Transverse colon (tissue), 4 donors: ENCODE measurements at regions of chr11 and their contacts with region 1.

Region 1: GRCh38 chr11:128831174-128832120 is 35.6 kb downstream of the KCNJ1 start:
- DNase-seq: peak; percentile 83
- H3K4me3 ChIP-seq: peak overlapping the region in 1 of 4 donors; percentile 9
- H3K27ac ChIP-seq: peak overlapping the region in 1 of 4 donors; percentile 7
- H3K4me1 ChIP-seq: peaks cover 0 to 6% (median 0%) of the 10 kb centered on the region in 4 donors
- H3K27me3 ChIP-seq: no peaks in the 10 kb centered on the region
- CTCF ChIP-seq: peak; percentile 80 to 92 (median 89)
- EP300 ChIP-seq: no peak
- POLR2A ChIP-seq: no peak

Region 2: GRCh38 chr11:128146926-128147605 is 684.4 kb before region 1 on chr11:
- in situ Hi-C with region 1: no loop called
- intact Hi-C with region 1: no loop called
- DNase-seq: no peak
- H3K4me3 ChIP-seq: no peak overlapping the region
- H3K27ac ChIP-seq: no peak overlapping the region
- H3K4me1 ChIP-seq: peaks cover 0 to 12% (median 0%) of the 10 kb centered on the region in 4 donors
- H3K27me3 ChIP-seq: no peaks in the 10 kb centered on the region
- CTCF ChIP-seq: no peak
- EP300 ChIP-seq: no peak
- POLR2A ChIP-seq: no peak

Region 3: DNA sequence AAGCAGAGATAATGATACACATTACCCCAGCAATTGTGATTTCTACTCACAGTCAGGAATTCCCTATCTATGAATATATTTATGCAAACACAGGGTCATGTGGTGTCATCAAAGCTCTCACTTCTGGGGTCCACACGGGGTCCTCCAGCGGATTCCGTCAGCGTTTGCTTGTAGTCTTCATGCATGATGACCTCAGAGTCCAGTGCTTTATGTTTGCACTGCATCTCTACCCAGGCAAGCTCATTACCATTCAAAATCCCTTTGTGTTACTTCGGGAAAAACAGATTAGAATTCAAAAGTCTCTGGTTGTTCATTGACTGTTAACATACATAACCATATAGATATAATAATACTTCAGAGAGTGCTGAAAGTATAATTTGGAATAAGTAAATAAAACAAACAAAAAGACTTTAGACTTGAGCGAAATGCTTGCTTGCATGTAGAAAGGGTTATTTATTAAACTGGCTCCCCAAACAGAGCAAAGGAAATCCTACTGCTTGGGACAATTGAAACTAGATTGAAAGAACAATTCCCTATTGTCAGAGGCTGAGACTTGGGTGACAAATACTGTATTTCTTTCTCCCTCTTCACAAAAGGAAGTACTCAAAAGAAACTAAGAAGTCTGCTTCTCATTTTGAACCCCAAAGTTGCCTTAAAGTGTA is 667.2 kb before region 1 on chr11:
- in situ Hi-C with region 1: loop called in 1 of 4 experiments (anchors 10 kb)
- intact Hi-C with region 1: no loop called
- DNase-seq: no peak
- H3K4me3 ChIP-seq: no peak overlapping the region
- H3K27ac ChIP-seq: no peak overlapping the region
- H3K4me1 ChIP-seq: no peaks in the 10 kb centered on the region
- H3K27me3 ChIP-seq: no peaks in the 10 kb centered on the region
- CTCF ChIP-seq: no peak
- EP300 ChIP-seq: no peak
- POLR2A ChIP-seq: no peak

Region 4: GRCh38 chr11:128261011-128261421 is 570.4 kb before region 1 on chr11:
- in situ Hi-C with region 1: loop called in 1 of 4 experiments (anchors 10 kb)
- intact Hi-C with region 1: no loop called
- DNase-seq: no peak
- H3K4me3 ChIP-seq: no peak overlapping the region
- H3K27ac ChIP-seq: no peak overlapping the region
- H3K4me1 ChIP-seq: no peaks in the 10 kb centered on the region
- H3K27me3 ChIP-seq: no peaks in the 10 kb centered on the region
- CTCF ChIP-seq: no peak
- EP300 ChIP-seq: no peak
- POLR2A ChIP-seq: no peak

Region 5: GRCh38 chr11:128290106-128290840 is 541.2 kb before region 1 on chr11:
- in situ Hi-C with region 1: loop called in 3 of 4 experiments (anchors 25 kb)
- intact Hi-C with region 1: loop called (anchors 10 kb)
- DNase-seq: peak; percentile 86
- H3K4me3 ChIP-seq: peak overlapping the region in 1 of 4 donors; percentile 32
- H3K27ac ChIP-seq: peak overlapping the region; percentile 85 to 87 (median 86)
- H3K4me1 ChIP-seq: peaks cover 15 to 54% (median 33%) of the 10 kb centered on the region in 4 donors
- H3K27me3 ChIP-seq: no peaks in the 10 kb centered on the region
- CTCF ChIP-seq: peak; percentile 83 to 96 (median 90)
- EP300 ChIP-seq: no peak
- POLR2A ChIP-seq: peak; percentile 50